ENCODE measurements at regions of chr16 and their contacts with region 1.

Region 1: GRCh38 chr16:2016407-2016922 is 3.1 kb upstream of the NPW start:
- DNase-seq: peak in 1 of 2 experiments; percentile 79
- H3K4me3 ChIP-seq: no peak overlapping the region
- H3K27ac ChIP-seq: no peak overlapping the region
- H3K4me1 ChIP-seq: peaks cover 0 to 15% (median 2%) of the 10 kb centered on the region in 4 experiments; a peak in 4 of 7 replicates
- H3K27me3 ChIP-seq: peaks cover 20 to 34% (median 26%) of the 10 kb centered on the region in 4 experiments
- CTCF ChIP-seq: peak; percentile 57 to 67 (median 58)
- EP300 ChIP-seq: no peak
- POLR2A ChIP-seq: no peak
- RAD21 ChIP-seq: peak; percentile 30 to 45; a peak in 3 of 4 replicates

Region 2: GRCh38 chr16:2090777-2091546 is 74.5 kb after region 1 on chr16:
- CTCF ChIA-PET with region 1: interaction called, 18 read pairs
- POLR2A ChIA-PET with region 1: no interaction called
- DNase-seq: peak; percentile 59 to 97
- H3K4me3 ChIP-seq: peak overlapping the region; percentile 38 to 72 (median 45)
- H3K27ac ChIP-seq: no peak overlapping the region
- H3K4me1 ChIP-seq: peaks cover 0 to 12% (median 9%) of the 10 kb centered on the region in 4 experiments; a peak in 5 of 7 replicates
- H3K27me3 ChIP-seq: no peaks in the 10 kb centered on the region
- CTCF ChIP-seq: peak in 2 of 3 experiments; percentile 68 to 69; a peak in 3 of 4 replicates
- EP300 ChIP-seq: no peak
- POLR2A ChIP-seq: no peak
- RAD21 ChIP-seq: peak; percentile 46 to 60

Region 3: DNA sequence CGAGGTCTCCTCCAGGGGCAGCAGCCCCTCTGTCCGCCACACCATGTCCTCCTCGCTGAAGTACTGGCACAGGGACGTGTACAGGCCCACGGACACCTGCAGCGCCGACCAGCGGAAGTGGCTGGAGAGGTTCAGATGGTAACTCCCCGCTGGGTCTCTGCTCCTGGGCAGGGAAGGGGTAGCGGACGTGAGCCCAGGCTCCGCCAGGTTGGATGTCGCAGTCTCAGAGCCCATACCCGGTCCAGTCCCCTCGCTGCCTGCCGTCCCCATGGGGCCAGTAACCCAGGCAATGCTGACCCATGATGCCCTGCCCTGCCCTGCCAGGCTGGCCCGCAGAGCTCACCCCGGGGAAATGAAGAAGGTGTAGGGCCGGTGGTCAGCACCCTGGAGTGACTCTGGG is 86.0 kb after region 1 on chr16:
- CTCF ChIA-PET with region 1: no interaction called
- POLR2A ChIA-PET with region 1: no interaction called
- DNase-seq: no peak
- H3K4me3 ChIP-seq: no peak overlapping the region
- H3K27ac ChIP-seq: no peak overlapping the region
- H3K4me1 ChIP-seq: no peaks in the 10 kb centered on the region
- H3K27me3 ChIP-seq: no peaks in the 10 kb centered on the region
- CTCF ChIP-seq: no peak
- EP300 ChIP-seq: no peak
- POLR2A ChIP-seq: no peak
- RAD21 ChIP-seq: no peak

Measured in H1 (cell line).